ENCODE measurements at regions of chr1 and their contacts with region 1.

Region 1: GRCh38 chr1:53765657-53766056 is 26.7 kb upstream of the GLIS1 start:
- DNase-seq: peak; percentile 14
- H3K4me3 ChIP-seq: no peak overlapping the region
- CTCF ChIP-seq: no peak

Region 2: GRCh38 chr1:53754484-53755312 is 11.0 kb before region 1 on chr1:
- CTCF ChIA-PET with region 1: interaction called, 56 read pairs
- POLR2A ChIA-PET with region 1: no interaction called
- DNase-seq: no peak
- H3K4me3 ChIP-seq: no peak overlapping the region
- CTCF ChIP-seq: peak; percentile 72

Region 3: DNA sequence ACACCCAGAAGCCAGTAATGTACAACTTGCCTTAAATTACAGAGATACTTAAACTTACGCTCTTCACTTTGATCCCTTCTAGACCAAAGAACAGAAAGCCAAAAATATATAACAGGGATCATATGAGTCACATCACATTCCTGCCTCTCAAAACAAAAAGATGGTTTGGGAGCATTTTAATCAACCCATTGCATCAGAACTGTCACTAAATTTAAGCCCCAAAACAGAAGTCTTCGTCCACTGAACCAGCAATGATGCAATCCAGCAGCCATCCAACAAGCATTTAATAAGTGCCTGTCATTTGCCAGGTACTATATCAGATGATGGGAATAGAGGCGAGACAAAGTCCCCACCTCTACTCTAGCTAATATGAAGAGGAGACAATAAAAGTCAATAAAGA is 16.0 kb after region 1 on chr1:
- CTCF ChIA-PET with region 1: interaction called, 12 read pairs
- POLR2A ChIA-PET with region 1: no interaction called
- DNase-seq: no peak
- H3K4me3 ChIP-seq: no peak overlapping the region
- CTCF ChIP-seq: no peak

Measured in AG04449 (cell line).